ENCODE measurements at regions of chr3 and their contacts with region 1.

Region 1: GRCh38 chr3:11878840-11879239 is 32.2 kb upstream of the TAMM41 start:
- DNase-seq: no peak
- H3K4me3 ChIP-seq: no peak overlapping the region
- H3K4me1 ChIP-seq: no peaks in the 10 kb centered on the region
- H3K27me3 ChIP-seq: peaks cover 13% of the 10 kb centered on the region; the same call in 1 of the 2 replicates

Region 2: DNA sequence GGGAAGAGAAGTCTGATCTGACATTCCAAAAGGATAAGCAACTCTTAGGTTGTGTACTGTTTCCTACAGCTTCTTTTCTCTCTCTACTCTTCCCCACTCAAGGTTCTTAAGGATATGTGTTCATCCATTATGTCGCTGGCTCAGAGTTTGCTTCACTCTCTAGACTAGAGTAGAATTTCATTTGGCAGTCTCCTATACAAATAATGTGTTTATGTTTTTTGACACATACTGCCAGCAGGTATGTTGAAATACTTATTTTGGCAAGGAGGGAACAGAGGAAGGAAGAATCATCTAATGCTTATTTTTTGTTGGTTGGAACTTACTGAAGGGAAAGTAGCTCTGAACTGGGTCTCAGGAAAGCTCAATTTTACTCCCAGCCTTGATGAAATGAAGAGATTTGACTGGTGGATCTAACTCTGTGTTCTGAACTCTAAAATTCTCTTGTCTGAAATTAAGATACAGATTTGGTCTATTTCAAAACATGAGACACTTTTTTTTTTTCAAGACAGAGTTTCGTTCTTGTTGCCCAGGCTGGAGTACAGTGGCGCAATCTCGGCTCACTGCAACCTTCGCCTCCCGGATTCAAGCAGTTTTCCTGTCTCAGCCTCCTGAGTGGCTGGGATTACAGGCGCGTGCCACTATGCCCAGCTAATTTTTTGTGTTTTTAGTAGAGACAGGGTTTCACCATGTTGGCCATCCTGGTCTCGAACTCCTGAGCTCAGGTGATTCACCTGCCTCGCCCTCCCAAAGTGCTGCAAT is 1884.6 kb before region 1 on chr3:
- in situ Hi-C with region 1: loop called (anchors 10 kb)
- DNase-seq: no peak
- H3K4me3 ChIP-seq: no peak overlapping the region
- H3K4me1 ChIP-seq: no peaks in the 10 kb centered on the region
- H3K27me3 ChIP-seq: no peaks in the 10 kb centered on the region